PC-3 (cell line): ENCODE measurements at regions of chr14 and their contacts with region 1.

Region 1: GRCh38 chr14:60724137-60724619 is at the start of gene SIX4:
- DNase-seq: peak; percentile 98
- ATAC-seq: peak; percentile 70
- H3K4me3 ChIP-seq: peak within 1 kb of the TSS; percentile 86
- H3K27ac ChIP-seq: peak within 1 kb of the TSS; percentile 38
- H3K4me1 ChIP-seq: peaks cover 20% of the 10 kb centered on the region
- H3K27me3 ChIP-seq: no peaks in the 10 kb centered on the region
- CTCF ChIP-seq: no peak
- total RNA-seq, gene SIX4: 29.2 and 33.2 TPM in 2 replicates

Region 2: GRCh38 chr14:60622917-60623257 is 101.3 kb before region 1 on chr14:
- CTCF ChIA-PET with region 1: interaction called, 10 read pairs
- POLR2A ChIA-PET with region 1: interaction called, 3 read pairs
- intact Hi-C with region 1: loop called (anchors 1 kb)
- DNase-seq: no peak
- ATAC-seq: no peak
- H3K4me3 ChIP-seq: no peak overlapping the region
- H3K27ac ChIP-seq: no peak overlapping the region
- H3K4me1 ChIP-seq: peaks cover 10% of the 10 kb centered on the region
- H3K27me3 ChIP-seq: no peaks in the 10 kb centered on the region
- CTCF ChIP-seq: no peak

Region 3: GRCh38 chr14:60734465-60735242 is 10.5 kb after region 1 on chr14 and contains the start of gene MNAT1:
- CTCF ChIA-PET with region 1: interaction called, 16 read pairs
- POLR2A ChIA-PET with region 1: no interaction called
- intact Hi-C with region 1: loop called (anchors 1 kb)
- DNase-seq: peak; percentile 95
- ATAC-seq: peak; percentile 84
- H3K4me3 ChIP-seq: peak within 1 kb of the TSS; percentile 94
- H3K27ac ChIP-seq: no peak within 1 kb of the TSS
- H3K4me1 ChIP-seq: peaks cover 15% of the 10 kb centered on the region
- H3K27me3 ChIP-seq: no peaks in the 10 kb centered on the region
- CTCF ChIP-seq: no peak
- total RNA-seq, gene MNAT1: 88.6 and 95.7 TPM in 2 replicates

Region 4: DNA sequence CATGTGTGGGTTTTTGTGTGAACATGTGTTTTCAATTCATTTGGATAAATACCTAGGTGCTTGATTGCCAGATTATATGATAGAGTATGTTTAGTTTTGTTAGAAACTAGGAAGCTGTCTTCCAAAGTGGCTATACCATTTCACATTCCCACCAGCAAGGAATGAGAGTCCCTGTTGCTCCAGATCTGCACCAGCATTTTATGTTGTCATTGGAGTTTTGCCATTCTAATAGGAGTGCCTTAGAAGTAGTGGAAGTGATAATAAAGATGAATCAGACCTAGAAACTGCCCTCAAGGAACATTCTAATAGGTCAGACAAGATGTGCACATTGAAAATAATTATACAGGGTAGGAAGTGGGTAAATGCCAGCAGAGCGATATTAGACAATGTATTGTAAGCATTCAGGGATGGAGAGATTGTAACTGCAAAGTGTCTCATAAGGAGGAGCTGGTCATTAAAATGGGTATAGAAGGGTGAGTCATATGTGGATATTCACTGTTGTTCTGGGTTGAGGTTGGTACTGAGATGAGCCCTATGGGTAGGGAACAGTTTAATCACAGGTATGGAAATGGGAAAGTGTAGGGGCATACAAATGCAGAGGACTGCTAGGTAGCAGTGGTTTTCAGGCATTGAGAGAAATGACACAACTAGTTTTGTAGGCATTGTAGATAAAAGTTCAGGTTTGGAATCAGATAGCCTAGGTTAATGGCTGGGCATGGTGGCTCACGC is 81.8 kb after region 1 on chr14:
- CTCF ChIA-PET with region 1: no interaction called
- POLR2A ChIA-PET with region 1: no interaction called
- intact Hi-C with region 1: loop called (anchors 1 kb)
- DNase-seq: peak; percentile 93
- ATAC-seq: peak; percentile 87
- H3K4me3 ChIP-seq: no peak overlapping the region
- H3K27ac ChIP-seq: peak overlapping the region; percentile 51
- H3K4me1 ChIP-seq: peaks cover 36% of the 10 kb centered on the region
- H3K27me3 ChIP-seq: no peaks in the 10 kb centered on the region
- CTCF ChIP-seq: no peak

Region 5: DNA sequence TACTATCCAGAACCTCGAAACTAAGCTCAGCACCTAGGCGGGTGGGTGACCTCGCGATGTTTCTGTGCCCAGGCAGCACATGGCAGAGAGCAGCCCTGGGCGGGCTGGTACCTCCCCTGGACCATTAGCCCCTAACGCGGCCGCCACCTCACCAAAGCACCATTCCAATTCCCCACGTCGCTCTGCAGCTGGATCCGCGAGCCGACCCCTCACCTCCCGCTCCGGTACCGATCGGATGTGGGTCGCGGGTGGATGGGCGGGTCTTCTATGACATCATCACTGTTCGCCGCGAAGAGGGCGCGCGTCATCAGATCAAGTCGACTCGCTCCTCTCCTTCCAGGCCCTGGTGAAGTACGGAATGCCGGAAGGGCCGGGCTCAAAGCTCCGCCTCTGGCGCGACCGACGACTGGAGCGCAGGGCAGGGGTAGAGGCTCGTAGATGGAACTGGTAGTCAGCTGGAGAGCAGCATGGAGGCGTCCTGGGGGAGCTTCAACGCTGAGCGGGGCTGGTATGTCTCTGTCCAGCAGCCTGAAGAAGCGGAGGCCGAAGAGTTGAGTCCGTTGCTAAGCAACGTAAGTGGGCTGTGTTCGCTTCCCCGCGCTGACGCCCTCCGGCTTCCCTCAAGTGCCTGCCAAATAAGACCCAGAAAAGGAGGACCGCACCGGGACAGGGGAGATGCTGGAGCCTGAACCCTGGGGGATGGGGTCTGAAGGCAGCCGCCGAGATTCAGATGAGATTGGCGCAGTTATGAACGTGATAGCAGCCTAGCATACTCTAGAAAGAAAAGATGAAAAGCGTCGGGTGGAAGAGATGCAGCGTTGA is 256.8 kb after region 1 on chr14 and contains the starts of genes SLC38A6 and TRMT5:
- CTCF ChIA-PET with region 1: no interaction called
- POLR2A ChIA-PET with region 1: interaction called, 3 read pairs
- intact Hi-C with region 1: loop called (anchors 1 kb)
- DNase-seq: peak; percentile 99
- ATAC-seq: peak; percentile 92
- H3K4me3 ChIP-seq: peak within 1 kb of the TSS; percentile 93
- H3K27ac ChIP-seq: peak within 1 kb of the TSS; percentile 71
- H3K4me1 ChIP-seq: peaks cover 57% of the 10 kb centered on the region
- H3K27me3 ChIP-seq: no peaks in the 10 kb centered on the region
- CTCF ChIP-seq: no peak
- total RNA-seq, gene SLC38A6: 24.8 and 28.0 TPM in 2 replicates
- total RNA-seq, gene TRMT5: 12.8 and 15.8 TPM in 2 replicates

Region 6: DNA sequence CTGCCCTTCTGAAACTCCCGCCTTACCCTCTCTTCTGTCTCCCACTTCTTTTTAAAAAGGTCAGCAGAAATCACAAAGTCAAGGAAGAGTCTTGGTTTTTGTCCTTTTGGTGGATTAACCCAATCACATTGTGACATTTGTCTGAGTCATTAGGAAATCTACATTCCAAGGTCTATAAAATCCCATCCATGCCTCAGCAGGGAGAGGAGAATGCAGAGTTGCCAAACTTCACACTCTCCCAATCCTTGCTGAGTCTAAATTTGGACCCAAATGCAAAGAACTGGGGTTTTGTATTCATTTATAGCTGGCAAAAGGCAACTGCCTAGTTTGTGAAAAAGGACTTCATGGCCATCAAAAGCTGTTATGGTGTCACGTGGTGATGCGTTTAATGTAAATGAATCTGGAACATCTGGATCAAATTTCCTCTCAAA is 489.0 kb after region 1 on chr14:
- CTCF ChIA-PET with region 1: interaction called, 5 read pairs
- POLR2A ChIA-PET with region 1: interaction called, 10 read pairs
- intact Hi-C with region 1: no loop called
- DNase-seq: peak; percentile 59
- ATAC-seq: no peak
- H3K4me3 ChIP-seq: no peak overlapping the region
- H3K27ac ChIP-seq: no peak overlapping the region
- H3K4me1 ChIP-seq: peaks cover 16% of the 10 kb centered on the region
- H3K27me3 ChIP-seq: no peaks in the 10 kb centered on the region
- CTCF ChIP-seq: no peak